CD4-positive, alpha-beta memory T cell (primary cell): ENCODE measurements at regions of chr11 and their contacts with region 1.

Region 1: GRCh38 chr11:118870396-118871345 is 13.0 kb upstream of the CXCR5 start:
- DNase-seq: peak in 2 of 5 donors; percentile 50 to 60
- H3K4me3 ChIP-seq: peak overlapping the region in 1 of 2 donors; percentile 33
- H3K4me3 Mint-ChIP-seq: peak overlapping the region; percentile 80 to 89 (median 83)
- H3K27ac ChIP-seq: peak overlapping the region; percentile 82
- H3K27ac Mint-ChIP-seq: peak overlapping the region; percentile 96 to 100 (median 99)
- H3K4me1 ChIP-seq: peaks cover 66% of the 10 kb centered on the region
- H3K4me1 Mint-ChIP-seq: peaks cover 41 to 62% (median 49%) of the 10 kb centered on the region in 4 donors
- H3K27me3 ChIP-seq: no peaks in the 10 kb centered on the region
- H3K27me3 Mint-ChIP-seq: no peaks in the 10 kb centered on the region

Region 2: GRCh38 chr11:118841469-118842242 is 29.0 kb before region 1 on chr11:
- CTCF ChIA-PET with region 1: no interaction called
- POLR2A ChIA-PET with region 1: interaction called, 7 read pairs
- intact Hi-C with region 1: loop called (anchors 2 kb)
- DNase-seq: peak; percentile 50 to 77 (median 56)
- H3K4me3 ChIP-seq: peak overlapping the region; percentile 30 to 49
- H3K4me3 Mint-ChIP-seq: peak overlapping the region; percentile 82 to 89 (median 86)
- H3K27ac ChIP-seq: peak overlapping the region; percentile 57
- H3K27ac Mint-ChIP-seq: peak overlapping the region; percentile 59 to 93 (median 92)
- H3K4me1 ChIP-seq: peaks cover 7% of the 10 kb centered on the region
- H3K4me1 Mint-ChIP-seq: peaks cover 7 to 17% (median 15%) of the 10 kb centered on the region in 4 donors
- H3K27me3 ChIP-seq: no peaks in the 10 kb centered on the region
- H3K27me3 Mint-ChIP-seq: no peaks in the 10 kb centered on the region

Region 3: DNA sequence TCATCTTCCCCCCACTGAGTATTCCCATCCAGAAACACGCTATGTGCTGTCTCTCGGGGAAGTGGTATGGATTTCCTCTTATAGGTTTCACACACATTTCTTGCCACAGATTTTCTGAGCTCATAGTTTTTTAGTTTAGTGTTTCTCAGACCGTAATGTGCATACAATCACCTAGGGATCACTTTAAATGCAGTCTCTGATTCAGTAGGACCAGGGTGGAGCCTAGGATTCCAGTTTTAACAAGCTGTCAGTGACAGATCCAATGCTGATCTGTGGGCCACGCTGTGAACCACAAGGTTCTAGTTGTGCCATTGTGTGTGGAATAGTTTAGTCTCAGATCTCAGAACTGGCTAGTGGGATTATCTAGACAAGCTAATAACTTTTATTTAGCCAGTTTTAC is 10.7 kb before region 1 on chr11:
- CTCF ChIA-PET with region 1: interaction called, 10 read pairs
- POLR2A ChIA-PET with region 1: interaction called, 3 read pairs
- intact Hi-C with region 1: no loop called
- DNase-seq: no peak
- H3K4me3 ChIP-seq: no peak overlapping the region
- H3K4me3 Mint-ChIP-seq: no peak overlapping the region
- H3K27ac ChIP-seq: no peak overlapping the region
- H3K27ac Mint-ChIP-seq: no peak overlapping the region
- H3K4me1 ChIP-seq: no peaks in the 10 kb centered on the region
- H3K4me1 Mint-ChIP-seq: peaks cover 3 to 12% (median 7%) of the 10 kb centered on the region in 4 donors
- H3K27me3 ChIP-seq: no peaks in the 10 kb centered on the region
- H3K27me3 Mint-ChIP-seq: no peaks in the 10 kb centered on the region

Region 4: DNA sequence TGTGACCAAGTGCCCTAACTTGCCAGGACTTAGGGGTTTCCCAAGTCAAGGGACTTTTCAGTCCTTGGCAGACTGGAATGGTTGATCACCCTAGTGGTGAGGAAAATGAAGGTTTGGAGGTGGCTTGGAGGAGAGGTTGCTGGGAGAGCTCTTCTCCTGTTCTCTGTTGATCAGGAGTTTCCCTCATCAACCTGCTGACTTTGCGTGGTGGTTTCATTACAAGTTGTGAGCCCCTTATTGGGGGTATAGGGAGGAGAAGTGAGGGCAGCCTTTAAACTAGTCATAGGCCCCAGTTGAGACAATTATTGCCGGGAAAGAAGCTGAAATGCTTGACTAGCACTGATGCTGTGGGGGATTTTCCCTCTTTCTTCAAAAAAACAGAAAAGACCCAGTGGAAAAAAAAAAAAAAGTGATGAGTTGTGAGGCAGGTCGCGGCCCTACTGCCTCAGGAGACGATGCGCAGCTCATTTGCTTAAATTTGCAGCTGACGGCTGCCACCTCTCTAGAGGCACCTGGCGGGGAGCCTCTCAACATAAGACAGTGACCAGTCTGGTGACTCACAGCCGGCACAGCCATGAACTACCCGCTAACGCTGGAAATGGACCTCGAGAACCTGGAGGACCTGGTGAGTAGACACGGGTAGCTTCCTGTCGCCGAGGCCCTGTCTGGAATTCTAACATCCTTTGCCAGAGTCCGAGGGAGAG is 12.8 kb after region 1 on chr11 and contains the start of gene CXCR5:
- CTCF ChIA-PET with region 1: interaction called, 21 read pairs
- POLR2A ChIA-PET with region 1: interaction called, 30 read pairs
- intact Hi-C with region 1: no loop called
- DNase-seq: peak; percentile 44 to 73 (median 51)
- H3K4me3 ChIP-seq: peak within 1 kb of the TSS; percentile 34 to 51
- H3K4me3 Mint-ChIP-seq: peak within 1 kb of the TSS; percentile 76 to 91 (median 87)
- H3K27ac ChIP-seq: peak within 1 kb of the TSS; percentile 64
- H3K27ac Mint-ChIP-seq: peak within 1 kb of the TSS; percentile 91 to 97 (median 94)
- H3K4me1 ChIP-seq: peaks cover 70% of the 10 kb centered on the region
- H3K4me1 Mint-ChIP-seq: peaks cover 46 to 87% (median 60%) of the 10 kb centered on the region in 4 donors
- H3K27me3 ChIP-seq: no peaks in the 10 kb centered on the region
- H3K27me3 Mint-ChIP-seq: no peaks in the 10 kb centered on the region
- total RNA-seq, gene CXCR5: 21.1 to 21.5 TPM

Region 5: GRCh38 chr11:118907051-118908042 is 36.7 kb after region 1 on chr11:
- CTCF ChIA-PET with region 1: interaction called, 9 read pairs
- POLR2A ChIA-PET with region 1: interaction called, 25 read pairs
- intact Hi-C with region 1: no loop called
- DNase-seq: peak; percentile 80 to 86 (median 83)
- H3K4me3 ChIP-seq: no peak overlapping the region
- H3K4me3 Mint-ChIP-seq: peak overlapping the region in 6 of 8 donors; percentile 0 to 85 (median 54)
- H3K27ac ChIP-seq: peak overlapping the region; percentile 40
- H3K27ac Mint-ChIP-seq: peak overlapping the region; percentile 91 to 96 (median 95)
- H3K4me1 ChIP-seq: peaks cover 55% of the 10 kb centered on the region
- H3K4me1 Mint-ChIP-seq: peaks cover 32 to 51% (median 42%) of the 10 kb centered on the region in 4 donors
- H3K27me3 ChIP-seq: no peaks in the 10 kb centered on the region
- H3K27me3 Mint-ChIP-seq: no peaks in the 10 kb centered on the region